ENCODE measurements at regions of chr1 and their contacts with region 1.

Region 1: GRCh38 chr1:37434292-37434907 is 40.0 kb upstream of the ZC3H12A start:
- DNase-seq: peak; percentile 60
- H3K4me3 ChIP-seq: no peak overlapping the region
- H3K27ac ChIP-seq: no peak overlapping the region
- H3K4me1 ChIP-seq: no peaks in the 10 kb centered on the region
- H3K27me3 ChIP-seq: peaks cover 5% of the 10 kb centered on the region
- CTCF ChIP-seq: peak; percentile 95

Region 2: GRCh38 chr1:36609241-36610027 is 825.0 kb before region 1 on chr1:
- CTCF ChIA-PET with region 1: no interaction called
- POLR2A ChIA-PET with region 1: no interaction called
- intact Hi-C with region 1: loop called (anchors 10 kb)
- DNase-seq: peak; percentile 82
- H3K4me3 ChIP-seq: no peak overlapping the region
- H3K27ac ChIP-seq: no peak overlapping the region
- H3K4me1 ChIP-seq: no peaks in the 10 kb centered on the region
- H3K27me3 ChIP-seq: no peaks in the 10 kb centered on the region
- CTCF ChIP-seq: peak; percentile 90

Region 3: GRCh38 chr1:36703526-36704208 is 730.7 kb before region 1 on chr1:
- CTCF ChIA-PET with region 1: no interaction called
- POLR2A ChIA-PET with region 1: no interaction called
- intact Hi-C with region 1: loop called (anchors 10 kb)
- DNase-seq: peak; percentile 80
- H3K4me3 ChIP-seq: no peak overlapping the region
- H3K27ac ChIP-seq: no peak overlapping the region
- H3K4me1 ChIP-seq: no peaks in the 10 kb centered on the region
- H3K27me3 ChIP-seq: peaks cover 21% of the 10 kb centered on the region
- CTCF ChIP-seq: peak; percentile 96

Region 4: DNA sequence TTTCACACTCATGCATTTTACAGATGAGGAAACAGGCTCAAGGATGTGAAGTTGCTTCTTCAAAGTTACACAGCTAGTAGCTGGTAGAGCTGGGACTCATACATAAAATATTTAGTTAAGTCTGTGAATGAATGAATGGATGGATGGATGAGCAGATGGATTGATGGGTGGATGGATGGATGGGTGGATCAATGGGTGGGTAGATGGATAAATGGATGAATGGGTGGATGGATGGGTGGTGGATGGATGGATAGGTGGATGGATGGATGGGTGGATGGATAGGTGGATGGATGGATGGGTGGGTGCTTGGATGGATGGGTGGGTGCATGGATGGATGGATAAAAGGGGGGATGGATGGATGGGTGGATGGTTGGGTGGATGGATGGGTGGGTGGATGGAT is 640.9 kb before region 1 on chr1:
- CTCF ChIA-PET with region 1: no interaction called
- POLR2A ChIA-PET with region 1: interaction called, 10 read pairs
- intact Hi-C with region 1: no loop called
- DNase-seq: no peak
- H3K4me3 ChIP-seq: no peak overlapping the region
- H3K27ac ChIP-seq: no peak overlapping the region
- H3K4me1 ChIP-seq: peaks cover 6% of the 10 kb centered on the region
- H3K27me3 ChIP-seq: no peaks in the 10 kb centered on the region
- CTCF ChIP-seq: no peak

Region 5: GRCh38 chr1:37808369-37809319 is 374.2 kb after region 1 on chr1:
- CTCF ChIA-PET with region 1: no interaction called
- POLR2A ChIA-PET with region 1: no interaction called
- intact Hi-C with region 1: no loop called
- DNase-seq: peak; percentile 71
- H3K4me3 ChIP-seq: peak overlapping the region; percentile 80
- H3K27ac ChIP-seq: peak overlapping the region; percentile 86
- H3K4me1 ChIP-seq: peaks cover 15% of the 10 kb centered on the region
- H3K27me3 ChIP-seq: no peaks in the 10 kb centered on the region
- CTCF ChIP-seq: peak; percentile 17; the same call in 1 of the 2 replicates

Region 6: GRCh38 chr1:38179483-38179882 is 745.1 kb after region 1 on chr1:
- CTCF ChIA-PET with region 1: no interaction called
- POLR2A ChIA-PET with region 1: no interaction called
- intact Hi-C with region 1: no loop called
- DNase-seq: no peak
- H3K4me3 ChIP-seq: no peak overlapping the region
- H3K27ac ChIP-seq: no peak overlapping the region
- H3K4me1 ChIP-seq: no peaks in the 10 kb centered on the region
- H3K27me3 ChIP-seq: no peaks in the 10 kb centered on the region
- CTCF ChIP-seq: no peak

Measured in A673 (cell line).